ENCODE measurements at regions of chr11 and their contacts with region 1.

Region 1: GRCh38 chr11:2305140-2305840 is 3.5 kb downstream of the TSPAN32 start:
- DNase-seq: peak; percentile 85 to 90 (median 87)
- ATAC-seq: peak; percentile 65
- H3K4me3 ChIP-seq: no peak overlapping the region
- H3K27ac ChIP-seq: peak overlapping the region in 3 of 4 donors; percentile 5 to 30 (median 29)
- H3K4me1 ChIP-seq: peaks cover 32% of the 10 kb centered on the region
- H3K27me3 ChIP-seq: no peaks in the 10 kb centered on the region
- CTCF ChIP-seq: peak; percentile 80 to 94 (median 90)
- POLR2A ChIP-seq: no peak

Region 2: DNA sequence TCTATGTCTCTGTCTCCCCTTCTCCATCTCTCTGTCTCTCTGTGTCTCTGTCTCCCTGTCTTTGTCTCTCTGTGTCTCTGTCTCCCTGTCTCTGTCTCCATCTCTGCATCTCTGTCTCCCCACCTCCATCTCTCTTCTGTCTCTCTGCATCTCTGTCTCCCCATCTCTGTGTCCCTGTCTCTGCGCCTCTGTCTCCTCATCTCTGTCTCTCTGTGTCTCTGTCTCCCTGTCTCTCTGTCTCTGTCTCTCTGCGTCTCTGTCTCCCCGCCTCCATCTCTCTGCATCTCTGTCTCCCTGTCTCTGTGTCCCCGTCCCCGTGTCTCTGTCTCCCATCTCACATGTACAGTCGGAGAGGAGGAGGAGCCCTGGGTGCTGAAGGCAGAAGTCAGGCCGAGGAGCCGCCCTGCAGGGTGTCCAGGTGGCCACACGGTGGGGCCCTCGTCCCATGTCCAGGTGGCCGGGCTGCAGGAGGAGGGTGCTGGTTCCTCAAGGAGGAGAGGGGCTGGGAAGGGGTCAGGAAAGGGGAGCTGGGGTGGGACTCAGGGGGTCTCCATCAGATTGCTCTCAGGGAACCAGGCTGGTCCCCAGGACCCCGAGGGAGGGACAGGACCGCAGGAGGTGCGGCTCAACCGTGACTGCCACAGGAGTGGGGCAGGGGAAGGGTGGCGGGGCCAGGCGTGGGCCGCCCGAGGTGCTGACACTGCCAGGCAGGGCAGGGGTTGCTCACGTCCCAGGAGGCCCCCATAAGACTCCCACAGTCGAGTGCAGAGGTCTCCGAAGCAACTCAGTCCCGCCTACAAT is 108.1 kb before region 1 on chr11:
- intact Hi-C with region 1: loop called (anchors 5 kb)
- DNase-seq: peak; percentile 81 to 87 (median 83)
- ATAC-seq: peak; percentile 75
- H3K4me3 ChIP-seq: no peak overlapping the region
- H3K27ac ChIP-seq: no peak overlapping the region
- H3K4me1 ChIP-seq: peaks cover 21% of the 10 kb centered on the region
- H3K27me3 ChIP-seq: no peaks in the 10 kb centered on the region
- CTCF ChIP-seq: peak; percentile 84 to 95 (median 92)
- POLR2A ChIP-seq: no peak

Region 3: GRCh38 chr11:2420502-2421225 is 115.4 kb after region 1 on chr11:
- intact Hi-C with region 1: loop called (anchors 2 kb)
- DNase-seq: peak; percentile 75 to 80 (median 78)
- ATAC-seq: peak; percentile 90
- H3K4me3 ChIP-seq: no peak overlapping the region
- H3K27ac ChIP-seq: no peak overlapping the region
- H3K4me1 ChIP-seq: peaks cover 14% of the 10 kb centered on the region
- H3K27me3 ChIP-seq: no peaks in the 10 kb centered on the region
- CTCF ChIP-seq: peak; percentile 90 to 97 (median 93)
- POLR2A ChIP-seq: no peak

Region 4: GRCh38 chr11:2526808-2527381 is 221.6 kb after region 1 on chr11:
- intact Hi-C with region 1: loop called (anchors 10 kb)
- DNase-seq: peak; percentile 16 to 52 (median 30)
- ATAC-seq: no peak
- H3K4me3 ChIP-seq: no peak overlapping the region
- H3K27ac ChIP-seq: peak overlapping the region in 2 of 4 donors; percentile 28 to 59
- H3K4me1 ChIP-seq: peaks cover 28% of the 10 kb centered on the region
- H3K27me3 ChIP-seq: no peaks in the 10 kb centered on the region
- CTCF ChIP-seq: peak in 1 of 7 experiments; percentile 20
- POLR2A ChIP-seq: no peak